Right lobe of liver (tissue), 6 donors: ENCODE measurements at regions of chr17 and their contacts with region 1.

Region 1: DNA sequence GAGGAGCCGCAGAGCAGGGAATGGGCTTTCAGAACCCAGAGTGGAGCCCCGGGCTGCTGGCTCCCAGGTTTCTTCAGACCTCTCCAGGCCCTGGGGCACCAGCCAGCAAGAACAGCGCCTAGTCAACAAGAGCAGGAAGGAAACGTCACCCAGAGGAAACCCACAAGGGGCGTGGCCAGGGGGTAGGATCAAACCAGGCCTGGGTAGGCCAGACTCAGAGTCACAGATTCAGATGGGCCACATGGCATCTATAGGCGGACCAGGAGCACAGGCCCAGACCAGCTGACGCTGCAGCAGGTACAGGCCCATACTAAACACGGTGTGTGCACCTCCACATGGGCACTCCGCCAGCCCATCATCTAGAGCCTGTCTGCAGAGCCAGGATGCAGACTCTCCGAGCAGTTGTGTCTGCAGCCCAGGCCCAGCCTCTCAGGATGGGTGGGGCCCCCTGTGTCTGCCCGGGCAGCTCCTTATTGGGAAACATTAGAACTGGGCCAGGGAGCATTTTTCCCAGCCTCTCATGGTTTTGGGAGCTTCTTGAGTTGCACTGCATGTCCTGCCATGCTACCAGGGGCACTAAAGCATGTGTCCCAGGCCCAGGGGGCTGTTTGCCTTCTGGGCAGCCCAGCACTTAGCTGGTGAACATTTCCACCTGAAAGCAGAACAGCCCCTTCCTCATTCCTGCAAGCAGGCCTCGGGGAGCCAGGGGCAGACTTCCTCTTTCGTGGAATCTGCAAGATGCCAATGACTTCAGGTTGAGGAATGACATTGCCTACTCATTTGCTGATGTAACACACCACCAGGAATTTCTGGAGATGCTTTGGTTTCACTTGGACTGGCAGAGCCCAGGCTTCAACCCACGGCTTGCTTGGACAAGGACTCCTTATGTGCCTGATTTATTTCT is at the start of gene NLRP1:
- DNase-seq: peak; percentile 75 to 87 (median 81)
- ATAC-seq: peak; percentile 79 to 89 (median 87)
- H3K4me3 ChIP-seq: peak within 1 kb of the TSS; percentile 28 to 40 (median 30)
- H3K27ac ChIP-seq: peak within 1 kb of the TSS; percentile 60 to 85 (median 66)
- H3K4me1 ChIP-seq: no peaks in the 10 kb centered on the region
- H3K27me3 ChIP-seq: no peaks in the 10 kb centered on the region
- CTCF ChIP-seq: no peak
- POLR2A ChIP-seq: peak; percentile 61
- total RNA-seq, gene NLRP1: 2.5 to 4.7 (median 3.3) TPM

Region 2: DNA sequence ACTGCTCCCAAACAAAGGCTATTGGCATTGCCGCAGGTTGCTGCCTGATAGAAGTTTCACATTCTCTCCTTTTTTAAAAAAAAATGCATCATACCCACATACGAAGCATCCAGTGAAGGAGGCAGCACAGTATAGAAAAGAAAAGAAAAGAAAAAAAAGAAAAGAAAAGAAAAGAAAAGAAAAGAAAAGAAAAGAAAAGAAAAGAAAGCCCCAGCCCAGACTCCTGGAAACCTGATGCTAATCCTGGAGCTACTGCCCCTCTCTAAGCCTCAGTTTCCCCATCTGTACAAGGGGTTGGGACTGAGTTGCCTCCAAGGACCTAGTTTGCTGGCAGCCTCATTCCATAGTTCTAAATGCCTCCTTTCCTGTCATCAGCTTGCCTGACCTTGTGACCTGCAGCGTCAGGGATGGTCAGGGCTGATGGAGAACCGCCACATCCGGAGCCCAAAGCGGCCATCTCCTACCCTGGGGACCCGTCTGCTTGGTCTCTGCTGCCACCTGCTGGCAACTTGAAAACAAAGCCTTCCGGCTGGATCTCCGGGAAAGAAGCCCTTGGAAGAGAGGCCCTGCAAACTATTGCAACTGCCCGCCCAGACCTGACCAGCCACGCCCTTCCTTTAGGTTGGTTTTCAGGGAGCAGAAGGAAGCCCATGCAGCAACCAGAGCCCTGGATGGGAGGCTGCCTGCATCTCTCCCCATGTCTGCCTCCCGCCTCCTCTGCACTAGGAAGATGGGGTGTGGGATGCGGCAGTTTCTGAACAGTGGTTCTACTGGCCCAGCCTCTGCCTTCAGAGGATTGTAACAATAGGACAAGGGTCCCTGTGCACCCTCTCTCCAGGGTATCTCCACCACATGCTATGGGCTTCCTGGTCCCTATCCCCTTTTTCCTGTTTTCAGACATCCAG is 837.3 kb after region 1 on chr17:
- intact Hi-C with region 1: loop called (anchors 5 kb)
- DNase-seq: peak; percentile 81 to 83 (median 81)
- ATAC-seq: peak; percentile 89 to 97 (median 93)
- H3K4me3 ChIP-seq: no peak overlapping the region
- H3K27ac ChIP-seq: no peak overlapping the region
- H3K4me1 ChIP-seq: no peaks in the 10 kb centered on the region
- H3K27me3 ChIP-seq: no peaks in the 10 kb centered on the region
- CTCF ChIP-seq: peak; percentile 80 to 83 (median 83)
- POLR2A ChIP-seq: no peak

Region 3: DNA sequence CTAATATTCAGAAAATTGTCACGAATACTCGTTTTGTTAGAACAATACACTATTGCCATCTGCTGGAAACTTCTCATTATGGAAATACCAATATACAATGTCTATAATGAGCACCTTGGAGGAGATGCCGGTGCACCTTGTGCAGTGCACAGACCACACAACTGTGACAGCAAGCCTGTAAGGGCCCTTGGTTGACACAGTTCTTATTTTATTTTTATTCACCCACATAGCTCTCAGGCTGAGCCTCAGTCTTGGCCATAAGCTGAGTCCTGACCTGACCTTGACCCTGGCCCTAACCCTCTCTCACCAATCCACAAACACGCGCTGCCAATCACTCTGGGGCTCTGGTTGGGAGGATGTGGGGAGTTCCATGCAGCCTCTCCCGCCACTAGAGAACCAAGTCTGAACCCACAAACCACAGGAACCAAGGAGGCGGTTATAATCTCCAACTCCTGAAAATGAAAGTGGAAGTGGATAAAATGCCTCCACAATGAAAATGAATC is 842.7 kb after region 1 on chr17:
- intact Hi-C with region 1: loop called (anchors 5 kb)
- DNase-seq: no peak
- ATAC-seq: peak in 2 of 4 donors; percentile 32 to 47
- H3K4me3 ChIP-seq: no peak overlapping the region
- H3K27ac ChIP-seq: no peak overlapping the region
- H3K4me1 ChIP-seq: no peaks in the 10 kb centered on the region
- H3K27me3 ChIP-seq: no peaks in the 10 kb centered on the region
- CTCF ChIP-seq: no peak
- POLR2A ChIP-seq: no peak